Endothelial cell of umbilical vein (primary cell): ENCODE measurements at regions of chr15 and their contacts with region 1.

Region 1: DNA sequence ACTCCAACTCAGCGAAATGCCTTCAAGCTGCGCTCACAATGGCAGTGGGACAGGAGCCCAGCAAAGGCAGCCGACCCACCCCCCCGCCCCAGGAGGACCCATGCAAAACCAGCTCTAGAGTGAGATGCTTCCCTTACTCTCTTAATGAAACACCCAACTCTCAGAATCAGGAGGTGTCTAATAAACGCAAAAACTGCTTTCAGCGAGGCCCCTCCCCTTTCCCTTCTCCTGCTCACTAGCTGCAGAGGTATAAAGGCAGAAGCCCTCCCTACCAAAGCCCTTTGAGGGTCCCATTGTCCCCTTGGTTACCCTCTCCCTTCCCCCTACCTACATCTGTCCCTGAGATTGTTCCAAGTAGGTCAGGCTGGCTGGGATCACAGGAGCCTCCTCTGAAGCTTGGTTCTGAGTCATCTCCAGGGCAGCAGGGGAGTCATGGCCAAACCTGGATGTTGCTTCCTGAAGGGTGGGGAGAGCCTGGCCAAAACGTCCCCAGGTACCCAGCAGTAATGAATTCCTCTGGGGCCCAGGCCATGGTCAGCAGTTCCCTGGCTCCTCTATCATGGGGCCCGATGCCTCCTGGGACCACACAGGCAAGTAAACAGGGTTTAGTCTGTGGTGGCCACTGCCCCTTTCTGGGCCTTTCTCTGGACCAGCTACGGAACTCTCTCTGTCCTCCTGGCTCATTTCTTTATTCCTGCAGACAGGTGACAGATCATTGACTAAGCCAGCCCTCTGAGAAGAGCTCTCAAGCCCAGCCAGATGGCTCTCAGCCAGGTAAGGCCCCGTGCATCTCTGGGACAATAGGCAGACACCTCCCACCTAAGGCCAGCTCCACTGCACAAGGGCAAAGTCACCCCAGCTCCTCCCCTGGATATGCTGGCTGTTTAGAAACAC is 8.6 kb downstream of the KLHL25 start:
- DNase-seq: peak; percentile 28
- H3K4me3 ChIP-seq: no peak overlapping the region
- H3K27ac ChIP-seq: no peak overlapping the region
- H3K4me1 ChIP-seq: peaks cover 8% of the 10 kb centered on the region
- H3K27me3 ChIP-seq: no peaks in the 10 kb centered on the region
- CTCF ChIP-seq: no peak
- POLR2A ChIP-seq: no peak

Region 2: GRCh38 chr15:85771781-85772445 is 14.2 kb before region 1 on chr15:
- CTCF ChIA-PET with region 1: no interaction called
- POLR2A ChIA-PET with region 1: no interaction called
- dilution Hi-C with region 1: no loop called
- intact Hi-C with region 1: loop called (anchors 2 kb)
- DNase-seq: peak; percentile 62
- H3K4me3 ChIP-seq: no peak overlapping the region
- H3K27ac ChIP-seq: no peak overlapping the region
- H3K4me1 ChIP-seq: peaks cover 12% of the 10 kb centered on the region
- H3K27me3 ChIP-seq: no peaks in the 10 kb centered on the region
- CTCF ChIP-seq: no peak
- POLR2A ChIP-seq: no peak